IMR-90 (cell line): ENCODE measurements at regions of chr11 and their contacts with region 1.

Region 1: DNA sequence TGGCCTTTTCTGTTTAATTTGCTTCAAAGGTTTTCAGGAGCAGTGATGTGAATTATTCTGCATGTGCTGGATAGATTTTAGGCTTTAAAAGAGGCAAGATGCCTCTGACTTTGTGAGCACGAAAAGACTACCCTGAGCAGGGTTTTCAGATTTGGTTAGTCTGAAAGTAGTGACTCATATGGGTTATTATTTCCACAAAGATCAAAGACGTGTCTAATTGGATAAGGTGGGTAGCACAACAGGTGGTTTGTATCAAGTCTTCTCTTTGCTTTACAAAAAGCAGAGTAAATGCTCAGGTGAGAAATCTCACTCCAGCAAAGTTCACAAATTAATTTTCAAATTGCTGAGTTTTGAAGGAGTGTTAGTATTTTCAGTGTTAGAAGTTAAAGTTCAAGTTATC is 37.6 kb upstream of the DBX1 start:
- DNase-seq: no peak
- ATAC-seq: no peak
- H3K4me3 ChIP-seq: no peak overlapping the region
- H3K27ac ChIP-seq: no peak overlapping the region
- H3K4me1 ChIP-seq: no peaks in the 10 kb centered on the region
- H3K27me3 ChIP-seq: peaks cover 13% of the 10 kb centered on the region
- CTCF ChIP-seq: no peak
- POLR2A ChIP-seq: no peak
- RAD21 ChIP-seq: no peak

Region 2: DNA sequence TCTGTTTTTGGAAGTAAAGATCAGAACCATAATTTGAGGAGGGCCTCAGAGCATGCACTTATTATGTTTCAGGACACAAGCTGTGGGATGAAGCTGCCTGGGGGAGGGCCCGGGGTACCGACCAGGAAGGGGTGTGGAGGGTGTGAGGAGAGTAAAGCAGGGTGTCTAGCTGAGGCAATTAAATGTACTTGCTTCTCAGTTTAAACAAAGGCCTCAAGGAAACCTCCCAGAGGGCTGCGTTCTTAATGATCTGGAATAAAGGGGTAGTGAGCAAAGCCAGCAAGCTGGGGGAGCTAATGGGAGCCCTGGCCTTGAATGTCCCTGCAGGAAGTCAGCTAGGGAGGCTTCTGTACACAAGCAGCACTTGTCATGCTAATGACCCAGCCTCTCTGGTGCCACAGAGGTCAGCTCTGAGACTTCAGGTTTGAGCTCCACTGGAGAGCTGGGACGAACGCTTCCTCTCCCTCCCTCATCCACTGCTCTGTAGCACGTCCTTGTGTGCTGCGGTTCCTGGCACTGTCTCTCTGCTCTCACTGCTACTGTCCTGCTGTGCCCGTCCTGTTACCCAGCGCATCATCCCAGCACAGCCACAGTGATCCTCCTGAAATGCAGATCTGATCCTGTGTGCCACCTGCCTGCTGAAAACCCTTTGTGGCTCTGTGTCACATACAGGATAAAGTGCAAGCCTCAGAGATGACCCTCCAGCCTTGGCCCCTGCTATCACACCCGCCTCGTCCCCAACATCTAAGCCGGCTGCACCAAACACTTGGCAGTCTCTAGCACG is 197.3 kb before region 1 on chr11:
- CTCF ChIA-PET with region 1: no interaction called
- POLR2A ChIA-PET with region 1: no interaction called
- dilution Hi-C with region 1: no loop called
- in situ Hi-C with region 1: no loop called
- intact Hi-C with region 1: no loop called
- DNase-seq: no peak
- ATAC-seq: no peak
- H3K4me3 ChIP-seq: no peak overlapping the region
- H3K27ac ChIP-seq: no peak overlapping the region
- H3K4me1 ChIP-seq: peaks cover 4% of the 10 kb centered on the region
- H3K27me3 ChIP-seq: no peaks in the 10 kb centered on the region
- CTCF ChIP-seq: no peak
- POLR2A ChIP-seq: no peak
- RAD21 ChIP-seq: no peak

Region 3: DNA sequence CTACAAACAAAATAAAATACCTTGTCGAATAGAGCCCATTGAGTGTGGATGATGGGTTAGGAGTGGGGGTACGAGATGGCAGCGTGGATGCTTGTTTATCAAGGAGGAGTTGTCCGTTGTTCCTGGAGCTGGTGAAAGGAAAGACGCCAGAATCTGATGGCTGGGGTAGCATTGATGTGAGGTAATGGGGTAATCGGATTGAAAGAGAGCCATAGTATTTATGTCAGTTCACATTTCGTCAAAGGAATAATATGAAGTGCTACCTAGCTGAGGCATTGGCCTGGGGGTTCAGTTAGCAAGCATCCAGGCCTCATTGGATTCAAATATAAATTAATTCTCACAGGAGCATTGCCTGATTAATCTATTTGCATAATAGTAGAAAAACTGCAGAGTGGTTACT is 20.7 kb before region 1 on chr11:
- CTCF ChIA-PET with region 1: no interaction called
- POLR2A ChIA-PET with region 1: no interaction called
- dilution Hi-C with region 1: no loop called
- in situ Hi-C with region 1: no loop called
- intact Hi-C with region 1: no loop called
- DNase-seq: no peak
- ATAC-seq: no peak
- H3K4me3 ChIP-seq: no peak overlapping the region
- H3K27ac ChIP-seq: no peak overlapping the region
- H3K4me1 ChIP-seq: no peaks in the 10 kb centered on the region
- H3K27me3 ChIP-seq: peaks cover 11% of the 10 kb centered on the region
- CTCF ChIP-seq: no peak
- POLR2A ChIP-seq: no peak
- RAD21 ChIP-seq: no peak

Region 4: DNA sequence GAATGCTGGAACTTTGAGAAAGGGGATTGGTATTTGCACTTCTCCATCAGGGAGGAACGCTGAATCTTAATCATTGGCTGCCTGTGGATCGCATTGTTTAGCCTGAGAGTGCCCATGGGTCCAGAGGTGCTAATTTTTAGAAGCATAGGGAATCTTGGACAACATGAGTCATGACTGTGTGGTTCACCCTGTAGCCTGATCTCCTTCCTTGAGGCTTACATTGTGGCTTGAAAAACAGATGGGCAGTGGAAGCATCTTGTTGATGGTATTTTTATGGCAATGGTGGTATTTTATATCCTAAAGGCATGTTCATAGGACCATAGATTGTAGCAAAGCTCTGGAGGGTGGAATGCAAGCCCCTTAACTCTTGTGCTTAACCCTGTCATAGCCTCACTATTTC is 61.6 kb after region 1 on chr11:
- CTCF ChIA-PET with region 1: no interaction called
- POLR2A ChIA-PET with region 1: no interaction called
- dilution Hi-C with region 1: no loop called
- in situ Hi-C with region 1: no loop called
- intact Hi-C with region 1: loop called (anchors 5 kb)
- DNase-seq: no peak
- ATAC-seq: no peak
- H3K4me3 ChIP-seq: no peak overlapping the region
- H3K27ac ChIP-seq: no peak overlapping the region
- H3K4me1 ChIP-seq: no peaks in the 10 kb centered on the region
- H3K27me3 ChIP-seq: peaks cover 2% of the 10 kb centered on the region; the same call in 1 of the 2 replicates
- CTCF ChIP-seq: no peak
- POLR2A ChIP-seq: no peak
- RAD21 ChIP-seq: no peak